ENCODE measurements at regions of chr14 and their contacts with region 1.

Region 1: GRCh38 chr14:20461274-20462001 is at the start of gene PIP4P1:
- DNase-seq: peak; percentile 100
- H3K4me3 ChIP-seq: peak within 1 kb of the TSS; percentile 83
- H3K27ac ChIP-seq: peak within 1 kb of the TSS; percentile 84
- H3K4me1 ChIP-seq: peaks cover 57% of the 10 kb centered on the region
- CTCF ChIP-seq: no peak
- total RNA-seq, gene PIP4P1: 23.3 and 26.9 TPM in 2 replicates

Region 2: GRCh38 chr14:20305265-20306078 is 156.0 kb before region 1 on chr14 and contains the start of gene TTC5:
- CTCF ChIA-PET with region 1: no interaction called
- POLR2A ChIA-PET with region 1: no interaction called
- intact Hi-C with region 1: loop called (anchors 1 kb)
- DNase-seq: peak; percentile 90
- H3K4me3 ChIP-seq: peak within 1 kb of the TSS; percentile 84
- H3K27ac ChIP-seq: peak within 1 kb of the TSS; percentile 29
- H3K4me1 ChIP-seq: peaks cover 14% of the 10 kb centered on the region
- CTCF ChIP-seq: peak; percentile 98
- total RNA-seq, gene TTC5: 14.9 and 17.9 TPM in 2 replicates

Region 3: GRCh38 chr14:20332788-20333493 is 128.5 kb before region 1 on chr14 and contains the start of gene CCNB1IP1:
- CTCF ChIA-PET with region 1: interaction called, 4 read pairs
- POLR2A ChIA-PET with region 1: interaction called, 24 read pairs
- intact Hi-C with region 1: no loop called
- DNase-seq: peak; percentile 91
- H3K4me3 ChIP-seq: peak within 1 kb of the TSS; percentile 83
- H3K27ac ChIP-seq: peak within 1 kb of the TSS; percentile 67
- H3K4me1 ChIP-seq: peaks cover 52% of the 10 kb centered on the region
- CTCF ChIP-seq: no peak
- total RNA-seq, gene CCNB1IP1: 56.6 and 58.5 TPM in 2 replicates

Region 4: DNA sequence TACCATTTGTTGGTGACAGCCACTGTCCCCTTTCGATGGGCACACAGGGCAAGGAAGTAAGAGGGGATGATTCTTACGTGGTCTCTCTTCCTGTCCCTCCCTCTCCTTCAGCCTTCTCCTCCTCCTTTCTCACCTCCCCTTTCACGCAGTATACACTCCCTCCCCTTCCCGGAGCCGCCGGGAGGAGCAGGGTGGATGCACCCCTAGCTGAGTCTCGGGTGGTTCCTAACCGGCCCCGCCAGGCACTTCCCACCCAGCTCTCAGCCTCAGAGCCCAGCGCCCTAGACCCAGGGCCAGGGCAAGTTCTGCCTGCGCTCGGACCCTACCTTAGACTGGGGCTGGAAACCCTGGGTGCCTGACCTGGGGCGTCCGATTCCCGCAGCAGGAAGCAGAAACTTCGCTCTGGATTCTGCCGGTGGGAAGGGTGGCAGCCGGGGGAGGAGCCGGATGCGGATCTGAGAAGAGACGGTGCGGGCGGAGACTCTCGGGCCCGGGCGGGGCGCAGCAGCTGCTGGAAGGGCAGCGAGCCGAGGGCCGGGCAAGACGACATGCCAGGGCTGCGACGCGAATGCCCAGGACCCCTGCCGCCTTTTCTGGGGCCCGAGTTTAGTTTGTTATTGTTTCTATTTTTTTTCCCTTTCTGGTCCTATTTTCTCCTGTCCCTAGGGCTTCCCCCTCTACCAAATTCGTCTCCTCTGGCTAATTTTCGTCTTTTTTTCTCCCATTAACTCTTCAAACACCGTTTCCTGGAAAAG is 48.2 kb before region 1 on chr14 and contains the start of gene TEP1:
- CTCF ChIA-PET with region 1: interaction called, 8 read pairs
- POLR2A ChIA-PET with region 1: interaction called, 20 read pairs
- intact Hi-C with region 1: loop called (anchors 2 kb)
- DNase-seq: peak; percentile 76
- H3K4me3 ChIP-seq: peak within 1 kb of the TSS; percentile 77
- H3K27ac ChIP-seq: peak within 1 kb of the TSS; percentile 48
- H3K4me1 ChIP-seq: peaks cover 37% of the 10 kb centered on the region
- CTCF ChIP-seq: no peak
- total RNA-seq, gene TEP1: 12.9 and 13.4 TPM in 2 replicates

Region 5: GRCh38 chr14:20427231-20428009 is 34.0 kb before region 1 on chr14:
- CTCF ChIA-PET with region 1: no interaction called
- POLR2A ChIA-PET with region 1: interaction called, 14 read pairs
- intact Hi-C with region 1: no loop called
- DNase-seq: peak; percentile 82
- H3K4me3 ChIP-seq: peak overlapping the region; percentile 54
- H3K27ac ChIP-seq: peak overlapping the region; percentile 94
- H3K4me1 ChIP-seq: peaks cover 55% of the 10 kb centered on the region
- CTCF ChIP-seq: no peak

Region 6: GRCh38 chr14:20682435-20683124 is 221.1 kb after region 1 on chr14:
- CTCF ChIA-PET with region 1: no interaction called
- POLR2A ChIA-PET with region 1: interaction called, 6 read pairs
- intact Hi-C with region 1: loop called (anchors 5 kb)
- DNase-seq: peak; percentile 68
- H3K4me3 ChIP-seq: peak overlapping the region; percentile 74
- H3K27ac ChIP-seq: peak overlapping the region; percentile 49
- H3K4me1 ChIP-seq: peaks cover 42% of the 10 kb centered on the region
- CTCF ChIP-seq: no peak

Region 7: DNA sequence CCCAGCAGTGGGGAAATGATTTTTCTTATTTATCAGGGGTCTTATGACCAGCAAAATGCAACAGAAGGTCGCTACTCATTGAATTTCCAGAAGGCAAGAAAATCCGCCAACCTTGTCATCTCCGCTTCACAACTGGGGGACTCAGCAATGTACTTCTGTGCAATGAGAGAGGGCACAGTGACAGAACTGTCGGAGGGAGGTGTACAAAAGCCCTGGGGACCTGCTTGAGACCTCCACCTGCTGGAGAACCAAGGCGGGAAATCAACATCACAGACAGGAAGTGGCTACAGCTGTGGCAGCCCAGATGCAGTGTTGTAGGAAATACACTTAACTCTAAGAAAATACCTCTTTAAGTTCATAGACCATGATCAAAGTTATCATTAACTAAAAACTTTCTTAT is 1463.0 kb after region 1 on chr14:
- CTCF ChIA-PET with region 1: no interaction called
- POLR2A ChIA-PET with region 1: no interaction called
- intact Hi-C with region 1: loop called (anchors 10 kb)
- DNase-seq: peak; percentile 98
- H3K4me3 ChIP-seq: peak overlapping the region; percentile 40
- H3K27ac ChIP-seq: peak overlapping the region; percentile 91
- H3K4me1 ChIP-seq: peaks cover 36% of the 10 kb centered on the region
- CTCF ChIP-seq: peak; percentile 62

Measured in OCI-LY7 (cell line).